ENCODE measurements at regions of chr5 and their contacts with region 1.

Region 1: GRCh38 chr5:112914584-112914983 is 7.4 kb downstream of the REEP5 start:
- H3K4me3 Mint-ChIP-seq: no peak overlapping the region
- H3K27ac Mint-ChIP-seq: no peak overlapping the region
- H3K4me1 Mint-ChIP-seq: peaks cover 76% of the 10 kb centered on the region
- H3K27me3 Mint-ChIP-seq: no peaks in the 10 kb centered on the region

Region 2: GRCh38 chr5:112109331-112110007 is 805.1 kb before region 1 on chr5:
- intact Hi-C with region 1: no loop called
- H3K4me3 Mint-ChIP-seq: no peak overlapping the region
- H3K27ac Mint-ChIP-seq: no peak overlapping the region
- H3K4me1 Mint-ChIP-seq: peaks cover 30% of the 10 kb centered on the region
- H3K27me3 Mint-ChIP-seq: no peaks in the 10 kb centered on the region

Region 3: DNA sequence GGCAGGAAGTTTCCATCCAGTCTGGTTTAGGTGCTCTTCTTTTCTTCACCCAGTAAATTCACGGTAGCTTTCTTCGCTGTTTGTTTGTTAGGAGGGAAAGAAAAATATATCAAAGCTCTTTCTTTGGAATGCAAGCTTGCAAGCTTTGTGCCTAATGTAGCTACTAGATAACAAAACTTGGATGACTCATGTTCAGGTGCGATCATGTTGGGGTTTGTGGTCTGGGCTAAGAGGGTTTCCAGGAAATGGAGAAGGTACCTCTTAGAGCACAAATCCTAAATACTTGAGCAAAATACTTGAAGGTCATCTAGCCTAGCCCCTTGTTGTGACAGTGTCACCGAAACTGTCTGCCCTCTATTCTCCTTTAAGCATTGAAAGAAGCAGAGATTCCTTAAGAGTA is 35.8 kb before region 1 on chr5:
- intact Hi-C with region 1: loop called (anchors 5 kb)
- H3K4me3 Mint-ChIP-seq: no peak overlapping the region
- H3K27ac Mint-ChIP-seq: no peak overlapping the region
- H3K4me1 Mint-ChIP-seq: peaks cover under 1% of the 10 kb centered on the region
- H3K27me3 Mint-ChIP-seq: no peaks in the 10 kb centered on the region

Region 4: DNA sequence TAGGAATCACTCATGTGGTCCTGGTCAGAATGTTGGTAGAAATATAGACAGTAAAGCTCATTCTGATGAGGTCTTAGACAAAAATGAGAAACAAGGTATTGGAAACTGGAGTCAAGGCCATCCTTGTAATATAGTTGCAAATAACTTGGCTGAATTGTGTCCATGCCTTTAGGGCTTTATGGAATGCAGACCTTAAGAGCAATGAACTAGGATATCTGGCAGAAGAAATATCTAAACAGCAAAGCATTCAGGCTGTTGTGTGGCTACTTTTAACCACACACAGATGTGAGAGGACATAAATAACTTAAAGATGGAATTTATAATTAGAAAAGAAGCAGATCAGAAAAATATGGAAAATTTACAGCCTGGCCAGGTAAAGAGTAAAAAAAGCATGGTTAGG is 727.1 kb after region 1 on chr5:
- intact Hi-C with region 1: no loop called
- H3K4me3 Mint-ChIP-seq: no peak overlapping the region
- H3K27ac Mint-ChIP-seq: no peak overlapping the region
- H3K4me1 Mint-ChIP-seq: no peaks in the 10 kb centered on the region
- H3K27me3 Mint-ChIP-seq: no peaks in the 10 kb centered on the region